Naive thymus-derived CD4-positive, alpha-beta T cell (primary cell): ENCODE measurements at regions of chr5 and their contacts with region 1.

Region 1: DNA sequence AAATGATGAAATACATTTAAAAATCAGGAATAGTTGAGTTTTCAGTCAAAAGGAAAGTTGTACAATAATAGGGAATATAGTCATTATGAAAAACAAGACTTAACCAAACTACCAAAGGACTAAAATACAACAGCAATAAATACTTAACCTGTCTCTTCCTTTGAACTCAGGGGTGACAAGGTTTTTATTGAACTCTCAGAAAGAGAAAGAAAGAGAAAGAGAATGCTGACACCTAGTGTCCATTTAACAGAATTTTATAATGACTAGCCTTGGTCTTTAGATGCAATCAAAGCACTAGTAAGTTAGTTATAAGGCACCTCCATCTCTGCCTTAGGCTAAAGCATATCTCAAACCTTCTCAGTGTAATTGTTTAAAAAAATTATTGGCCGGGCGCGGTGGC is 47.5 kb downstream of the UIMC1 start:
- DNase-seq: peak in 6 of 9 donors; percentile 21 to 59 (median 41)
- ATAC-seq: peak; percentile 70
- H3K4me3 ChIP-seq: no peak overlapping the region
- H3K4me3 Mint-ChIP-seq: no peak overlapping the region
- H3K27ac ChIP-seq: no peak overlapping the region
- H3K27ac Mint-ChIP-seq: peak overlapping the region in 1 of 9 donors; percentile 19
- H3K4me1 ChIP-seq: no peaks in the 10 kb centered on the region
- H3K4me1 Mint-ChIP-seq: peaks cover 2 to 19% (median 11%) of the 10 kb centered on the region in 7 donors
- H3K27me3 ChIP-seq: no peaks in the 10 kb centered on the region
- H3K27me3 Mint-ChIP-seq: no peaks in the 10 kb centered on the region

Region 2: GRCh38 chr5:175729829-175730277 is 1229.2 kb before region 1 on chr5:
- CTCF ChIA-PET with region 1: no interaction called
- POLR2A ChIA-PET with region 1: no interaction called
- intact Hi-C with region 1: loop called (anchors 5 kb)
- DNase-seq: peak; percentile 79 to 95 (median 90)
- ATAC-seq: peak; percentile 95
- H3K4me3 ChIP-seq: no peak overlapping the region
- H3K4me3 Mint-ChIP-seq: peak overlapping the region in 4 of 10 donors; percentile 1 to 15 (median 10)
- H3K27ac ChIP-seq: no peak overlapping the region
- H3K27ac Mint-ChIP-seq: peak overlapping the region in 1 of 9 donors; percentile 41
- H3K4me1 ChIP-seq: peaks cover 0 to 3% of the 10 kb centered on the region in 2 donors
- H3K4me1 Mint-ChIP-seq: peaks cover 0 to 9% (median 7%) of the 10 kb centered on the region in 7 donors
- H3K27me3 ChIP-seq: no peaks in the 10 kb centered on the region
- H3K27me3 Mint-ChIP-seq: peaks cover 13 to 39% (median 22%) of the 10 kb centered on the region in 5 donors

Region 3: GRCh38 chr5:176573564-176574296 is 385.3 kb before region 1 on chr5:
- CTCF ChIA-PET with region 1: no interaction called
- POLR2A ChIA-PET with region 1: no interaction called
- intact Hi-C with region 1: loop called in 1 of 2 experiments (anchors 5 kb)
- DNase-seq: peak; percentile 48 to 80 (median 67)
- ATAC-seq: peak; percentile 88
- H3K4me3 ChIP-seq: no peak overlapping the region
- H3K4me3 Mint-ChIP-seq: no peak overlapping the region
- H3K27ac ChIP-seq: no peak overlapping the region
- H3K27ac Mint-ChIP-seq: peak overlapping the region in 1 of 9 donors; percentile 46
- H3K4me1 ChIP-seq: no peaks in the 10 kb centered on the region
- H3K4me1 Mint-ChIP-seq: peaks cover 0 to 11% (median 6%) of the 10 kb centered on the region in 7 donors
- H3K27me3 ChIP-seq: no peaks in the 10 kb centered on the region
- H3K27me3 Mint-ChIP-seq: peaks cover 0 to 4% (median 0%) of the 10 kb centered on the region in 5 donors

Region 4: GRCh38 chr5:176810084-176810597 is 148.9 kb before region 1 on chr5 and contains the start of gene UNC5A:
- CTCF ChIA-PET with region 1: no interaction called
- POLR2A ChIA-PET with region 1: no interaction called
- intact Hi-C with region 1: loop called in 1 of 2 experiments (anchors 2 kb)
- DNase-seq: peak; percentile 17 to 79 (median 49)
- ATAC-seq: peak; percentile 69
- H3K4me3 ChIP-seq: peak within 1 kb of the TSS; percentile 9
- H3K4me3 Mint-ChIP-seq: peak within 1 kb of the TSS; percentile 70 to 91 (median 84)
- H3K27ac ChIP-seq: no peak within 1 kb of the TSS
- H3K27ac Mint-ChIP-seq: peak within 1 kb of the TSS in 1 of 9 donors; percentile 65
- H3K4me1 ChIP-seq: peaks cover 0 to 6% of the 10 kb centered on the region in 2 donors
- H3K4me1 Mint-ChIP-seq: peaks cover 7 to 17% (median 14%) of the 10 kb centered on the region in 7 donors
- H3K27me3 ChIP-seq: peaks cover 0 to 4% of the 10 kb centered on the region in 2 donors
- H3K27me3 Mint-ChIP-seq: peaks cover 66 to 75% (median 72%) of the 10 kb centered on the region in 5 donors
- total RNA-seq, gene UNC5A: not detected

Region 5: GRCh38 chr5:177049285-177049684 is 90.2 kb after region 1 on chr5:
- CTCF ChIA-PET with region 1: no interaction called
- POLR2A ChIA-PET with region 1: no interaction called
- intact Hi-C with region 1: no loop called
- DNase-seq: peak in 1 of 9 donors; percentile 3
- ATAC-seq: no peak
- H3K4me3 ChIP-seq: no peak overlapping the region
- H3K4me3 Mint-ChIP-seq: no peak overlapping the region
- H3K27ac ChIP-seq: no peak overlapping the region
- H3K27ac Mint-ChIP-seq: peak overlapping the region in 4 of 9 donors; percentile 4 to 65 (median 24)
- H3K4me1 ChIP-seq: no peaks in the 10 kb centered on the region
- H3K4me1 Mint-ChIP-seq: no peaks in the 10 kb centered on the region
- H3K27me3 ChIP-seq: no peaks in the 10 kb centered on the region
- H3K27me3 Mint-ChIP-seq: no peaks in the 10 kb centered on the region